ENCODE measurements at regions of chr7 and their contacts with region 1.

Region 1: GRCh38 chr7:101804967-101805366 is 12.5 kb upstream of the CUX1 start:
- DNase-seq: no peak
- ATAC-seq: peak in 3 of 4 donors; percentile 28 to 42 (median 41)
- H3K4me3 ChIP-seq: no peak overlapping the region
- H3K27ac ChIP-seq: no peak overlapping the region
- H3K4me1 ChIP-seq: no peaks in the 10 kb centered on the region
- H3K27me3 ChIP-seq: no peaks in the 10 kb centered on the region
- CTCF ChIP-seq: peak in 3 of 4 donors; percentile 19 to 20 (median 19)
- POLR2A ChIP-seq: no peak

Region 2: DNA sequence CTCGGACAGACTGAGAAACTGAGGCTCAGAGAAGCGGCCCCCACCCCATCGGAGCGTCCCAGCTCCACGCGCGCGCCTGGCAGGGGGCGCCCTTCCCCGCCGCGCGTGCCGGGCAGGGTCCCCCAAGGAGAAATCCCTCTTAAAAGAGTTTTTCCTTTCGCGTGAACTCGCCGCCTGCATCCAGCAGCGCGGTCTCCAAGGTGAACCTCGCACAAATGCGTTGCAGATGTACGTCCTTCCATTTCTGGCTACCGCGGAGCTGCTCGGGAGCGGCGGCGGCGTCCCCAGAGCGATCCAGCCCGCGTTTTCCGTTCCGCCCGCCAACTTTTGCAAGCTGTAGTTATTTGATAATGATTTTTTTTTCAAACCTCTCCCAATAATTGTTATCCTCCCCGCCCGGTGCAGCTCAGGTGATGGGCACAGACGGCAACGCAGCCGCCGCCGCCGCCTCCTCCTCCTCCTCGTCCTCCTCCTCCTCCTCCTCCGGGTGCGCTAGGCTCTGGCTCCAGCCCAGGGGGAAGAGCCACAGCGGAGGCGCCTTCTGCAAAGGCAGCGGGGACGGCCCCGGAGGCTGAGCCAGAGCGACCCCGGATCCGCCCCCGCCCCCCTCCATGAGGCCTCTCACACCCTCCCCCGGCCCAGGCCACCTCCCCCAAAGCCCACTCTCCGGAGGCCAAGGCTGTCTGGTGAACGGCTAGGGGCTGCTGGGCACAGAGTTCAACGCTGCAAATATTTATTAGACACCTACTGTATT is 61.5 kb before region 1 on chr7:
- intact Hi-C with region 1: loop called in 1 of 2 experiments (anchors 5 kb)
- DNase-seq: peak in 2 of 3 donors; percentile 52 to 63
- ATAC-seq: peak; percentile 51 to 78 (median 69)
- H3K4me3 ChIP-seq: peak overlapping the region; percentile 31 to 50 (median 37)
- H3K27ac ChIP-seq: no peak overlapping the region
- H3K4me1 ChIP-seq: peaks cover 0 to 6% (median 0%) of the 10 kb centered on the region in 4 donors
- H3K27me3 ChIP-seq: no peaks in the 10 kb centered on the region
- CTCF ChIP-seq: peak; percentile 30 to 61 (median 54)
- POLR2A ChIP-seq: no peak